PC-9 (cell line): ENCODE measurements at regions of chrX and their contacts with region 1.

Region 1: DNA sequence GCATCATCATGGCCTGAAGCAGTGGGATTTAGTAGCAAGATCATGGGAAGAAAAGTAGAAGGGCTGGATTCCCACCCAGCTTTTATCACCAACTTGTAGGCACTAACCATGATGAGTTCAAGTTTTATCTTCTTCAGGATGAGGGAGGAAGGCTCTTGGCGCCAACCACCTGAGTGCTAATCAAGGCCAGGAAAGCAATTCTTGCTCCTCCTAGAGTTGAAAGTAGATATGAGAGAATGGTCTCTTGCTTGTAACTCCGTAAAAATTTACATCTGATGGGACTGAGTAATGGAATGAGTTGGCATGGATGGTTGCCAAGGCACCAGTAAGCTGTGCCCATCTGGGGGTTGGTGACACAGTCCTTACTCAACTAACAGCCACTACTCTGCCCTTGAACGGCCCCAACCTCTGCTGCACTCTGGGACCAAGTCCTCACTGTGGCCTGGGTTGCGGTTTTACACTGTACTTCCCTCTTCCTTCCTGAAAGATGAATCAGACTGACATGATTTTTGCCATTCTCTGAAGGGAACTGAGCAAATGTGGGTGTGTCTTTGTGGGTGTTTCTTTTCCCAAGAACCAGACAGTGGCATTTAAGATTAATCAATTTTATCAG is 39.4 kb upstream of the NDP start:
- DNase-seq: peak; percentile 65 to 77
- H3K4me3 ChIP-seq: no peak overlapping the region
- H3K27ac ChIP-seq: 0 out of 2 replicates have a peak overlapping the region, but pooled peaks have one; percentile 34
- H3K4me1 ChIP-seq: no peaks in the 10 kb centered on the region
- H3K27me3 ChIP-seq: no peaks in the 10 kb centered on the region
- CTCF ChIP-seq: no peak

Region 2: GRCh38 chrX:43892471-43892870 is 120.1 kb before region 1 on chrX:
- CTCF ChIA-PET with region 1: no interaction called
- POLR2A ChIA-PET with region 1: no interaction called
- intact Hi-C with region 1: no loop called
- DNase-seq: no peak
- H3K4me3 ChIP-seq: no peak overlapping the region
- H3K27ac ChIP-seq: no peak overlapping the region
- H3K4me1 ChIP-seq: no peaks in the 10 kb centered on the region
- H3K27me3 ChIP-seq: no peaks in the 10 kb centered on the region
- CTCF ChIP-seq: no peak

Region 3: GRCh38 chrX:43910012-43910411 is 102.6 kb before region 1 on chrX:
- CTCF ChIA-PET with region 1: no interaction called
- POLR2A ChIA-PET with region 1: no interaction called
- intact Hi-C with region 1: no loop called
- DNase-seq: no peak
- H3K4me3 ChIP-seq: no peak overlapping the region
- H3K27ac ChIP-seq: no peak overlapping the region
- H3K4me1 ChIP-seq: no peaks in the 10 kb centered on the region
- H3K27me3 ChIP-seq: no peaks in the 10 kb centered on the region
- CTCF ChIP-seq: no peak

Region 4: GRCh38 chrX:43974741-43975465 is 37.7 kb before region 1 on chrX:
- CTCF ChIA-PET with region 1: no interaction called
- POLR2A ChIA-PET with region 1: no interaction called
- intact Hi-C with region 1: loop called (anchors 5 kb)
- DNase-seq: no peak
- H3K4me3 ChIP-seq: no peak overlapping the region
- H3K27ac ChIP-seq: no peak overlapping the region
- H3K4me1 ChIP-seq: no peaks in the 10 kb centered on the region
- H3K27me3 ChIP-seq: no peaks in the 10 kb centered on the region
- CTCF ChIP-seq: no peak